Naive thymus-derived CD8-positive, alpha-beta T cell (primary cell): ENCODE measurements at regions of chr9 and their contacts with region 1.

Region 1: DNA sequence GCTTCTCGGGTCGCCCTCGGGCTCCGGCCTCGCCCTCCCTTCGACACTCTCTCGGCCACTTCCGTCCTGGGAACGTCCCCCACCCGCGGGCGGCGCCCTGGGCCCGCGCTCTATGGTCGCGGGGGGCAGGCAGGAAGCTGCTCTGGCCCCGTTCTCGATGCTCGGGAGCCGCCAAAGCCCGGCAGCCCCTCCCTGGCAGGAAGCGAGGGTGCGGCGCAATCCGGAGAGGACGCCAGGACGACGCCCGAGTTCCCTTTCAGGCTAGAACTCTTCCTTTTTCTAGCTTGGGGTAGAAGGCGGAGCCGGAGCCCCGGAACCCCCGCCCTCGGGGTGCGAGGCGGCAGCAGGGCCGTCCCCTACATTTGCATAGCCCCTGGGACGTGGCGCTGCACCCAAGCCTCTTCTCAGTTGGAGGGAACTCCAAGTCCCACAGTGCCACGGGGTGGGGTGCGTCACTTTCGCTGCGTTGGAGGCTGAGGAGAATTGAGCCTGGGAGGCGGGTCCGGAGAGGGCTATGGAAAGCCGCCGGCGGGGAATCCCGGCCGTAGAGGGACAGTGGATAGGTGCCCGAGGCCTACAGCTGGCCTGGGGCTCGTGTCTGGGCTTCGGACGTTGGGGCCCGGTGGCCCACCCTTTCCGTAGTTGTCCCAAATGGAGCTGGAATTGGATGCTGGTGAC is at the starts of genes CREB3 and TLN1:
- DNase-seq: peak; percentile 87 to 98 (median 95)
- ATAC-seq: peak; percentile 91 to 93
- H3K4me3 Mint-ChIP-seq: peak within 1 kb of the TSS in 5 of 10 donors; percentile 94 to 98 (median 95)
- H3K27ac Mint-ChIP-seq: peak within 1 kb of the TSS in 8 of 10 donors; percentile 83 to 97 (median 95)
- H3K4me1 Mint-ChIP-seq: peaks cover 19 to 30% (median 24%) of the 10 kb centered on the region in 4 donors
- H3K27me3 Mint-ChIP-seq: no peaks in the 10 kb centered on the region
- polyA plus RNA-seq, gene CREB3: 29.8 to 40.3 (median 33.1) TPM
- polyA plus RNA-seq, gene TLN1: 32.9 to 88.9 (median 36.4) TPM

Region 2: GRCh38 chr9:35616681-35617459 is 115.4 kb before region 1 on chr9:
- POLR2A ChIA-PET with region 1: interaction called, 11 read pairs
- DNase-seq: peak; percentile 53 to 84 (median 64)
- ATAC-seq: peak; percentile 74 to 84
- H3K4me3 Mint-ChIP-seq: peak overlapping the region; percentile 82 to 94 (median 87)
- H3K27ac Mint-ChIP-seq: peak overlapping the region; percentile 90 to 98 (median 94)
- H3K4me1 Mint-ChIP-seq: peaks cover 32 to 88% (median 45%) of the 10 kb centered on the region in 4 donors
- H3K27me3 Mint-ChIP-seq: no peaks in the 10 kb centered on the region

Region 3: DNA sequence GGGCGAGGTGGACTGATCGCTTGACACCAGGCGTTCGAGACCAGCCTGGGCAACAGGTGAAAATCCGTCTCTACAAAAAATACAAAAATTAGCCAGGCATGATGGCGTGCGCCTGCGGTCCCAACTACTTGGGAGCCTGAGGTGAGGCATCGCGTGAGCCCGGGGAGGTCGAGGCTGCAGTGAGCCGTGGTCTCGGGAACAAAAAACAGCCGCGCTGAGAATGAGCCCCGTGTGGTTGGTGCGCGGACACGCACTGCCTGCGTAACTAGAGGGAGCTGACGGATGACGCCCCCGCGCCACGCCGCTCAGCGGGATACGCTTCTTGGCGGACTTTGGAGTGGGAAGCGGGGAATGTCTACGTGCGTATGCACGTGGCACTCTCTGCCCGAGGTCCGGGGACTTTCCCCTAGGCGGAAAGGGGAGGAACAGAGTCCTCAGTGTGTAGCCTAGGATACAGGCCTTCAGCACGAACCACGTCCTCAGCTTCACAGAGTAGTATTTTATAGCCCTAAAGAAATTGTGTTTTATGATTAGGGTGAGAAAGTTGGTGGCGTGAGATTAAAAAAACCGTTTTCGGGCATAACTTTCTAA is 74.6 kb before region 1 on chr9 and contains the start of gene RMRP:
- POLR2A ChIA-PET with region 1: interaction called, 31 read pairs
- DNase-seq: peak in 9 of 10 donors; percentile 69 to 94 (median 89)
- ATAC-seq: peak; percentile 83 to 85
- H3K4me3 Mint-ChIP-seq: peak within 1 kb of the TSS; percentile 74 to 94 (median 87)
- H3K27ac Mint-ChIP-seq: peak within 1 kb of the TSS; percentile 94 to 100 (median 98)
- H3K4me1 Mint-ChIP-seq: peaks cover 36 to 75% (median 70%) of the 10 kb centered on the region in 4 donors
- H3K27me3 Mint-ChIP-seq: peaks cover 0 to 5% (median 0%) of the 10 kb centered on the region in 5 donors
- polyA plus RNA-seq, gene RMRP: 33.0 TPM in 1 of 3 donors, not detected in the others

Region 4: DNA sequence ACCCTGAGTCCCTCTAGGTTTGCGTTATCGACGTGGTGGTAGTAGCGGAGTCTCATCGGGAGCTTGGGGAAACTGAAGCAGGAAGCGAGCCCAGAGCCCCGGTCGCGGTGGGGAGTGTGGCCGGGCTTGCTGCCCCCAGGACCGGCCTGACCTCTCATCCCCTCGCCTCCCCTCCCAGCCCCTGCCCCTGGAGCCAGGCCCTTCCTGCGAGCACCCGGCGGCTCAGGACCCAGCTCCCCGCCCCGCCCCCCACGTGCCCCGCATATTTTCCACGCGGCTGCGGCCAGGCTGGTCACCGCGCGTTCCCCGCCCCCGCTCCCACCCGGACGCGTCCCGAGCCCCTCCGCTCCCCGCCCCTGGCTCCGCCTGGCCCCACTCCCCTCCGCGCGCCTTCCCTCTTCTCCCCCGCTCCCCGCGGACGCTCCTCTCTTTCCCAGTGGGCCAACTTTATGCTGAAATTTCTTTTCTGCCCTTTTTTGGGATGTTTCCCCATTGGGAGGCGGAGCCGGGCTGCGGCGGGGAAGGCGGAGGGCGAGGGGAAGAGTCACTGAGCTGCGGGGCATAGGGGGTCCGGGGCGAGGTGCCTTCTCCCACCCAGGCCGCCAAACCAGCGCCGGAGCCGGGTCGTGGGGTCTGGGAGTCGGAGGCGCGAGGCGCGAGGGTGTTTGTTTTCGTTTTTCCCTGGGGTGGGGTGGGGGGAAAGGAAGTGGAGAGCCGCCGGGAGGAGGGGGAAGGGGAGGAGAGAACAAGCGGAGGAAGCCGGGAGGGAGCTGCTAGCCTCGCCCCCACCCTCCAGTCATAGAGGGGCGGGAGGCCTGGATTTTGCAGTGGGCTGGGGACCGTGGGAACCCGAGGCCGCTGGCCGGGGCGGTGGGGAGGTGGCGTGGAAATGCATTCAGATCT is 41.6 kb before region 1 on chr9:
- POLR2A ChIA-PET with region 1: interaction called, 13 read pairs
- DNase-seq: peak in 7 of 10 donors; percentile 17 to 39 (median 30)
- ATAC-seq: peak; percentile 63 to 71
- H3K4me3 Mint-ChIP-seq: peak overlapping the region; percentile 86 to 94 (median 88)
- H3K27ac Mint-ChIP-seq: peak overlapping the region; percentile 29 to 87 (median 78)
- H3K4me1 Mint-ChIP-seq: peaks cover 11 to 27% (median 21%) of the 10 kb centered on the region in 4 donors
- H3K27me3 Mint-ChIP-seq: no peaks in the 10 kb centered on the region

Region 5: DNA sequence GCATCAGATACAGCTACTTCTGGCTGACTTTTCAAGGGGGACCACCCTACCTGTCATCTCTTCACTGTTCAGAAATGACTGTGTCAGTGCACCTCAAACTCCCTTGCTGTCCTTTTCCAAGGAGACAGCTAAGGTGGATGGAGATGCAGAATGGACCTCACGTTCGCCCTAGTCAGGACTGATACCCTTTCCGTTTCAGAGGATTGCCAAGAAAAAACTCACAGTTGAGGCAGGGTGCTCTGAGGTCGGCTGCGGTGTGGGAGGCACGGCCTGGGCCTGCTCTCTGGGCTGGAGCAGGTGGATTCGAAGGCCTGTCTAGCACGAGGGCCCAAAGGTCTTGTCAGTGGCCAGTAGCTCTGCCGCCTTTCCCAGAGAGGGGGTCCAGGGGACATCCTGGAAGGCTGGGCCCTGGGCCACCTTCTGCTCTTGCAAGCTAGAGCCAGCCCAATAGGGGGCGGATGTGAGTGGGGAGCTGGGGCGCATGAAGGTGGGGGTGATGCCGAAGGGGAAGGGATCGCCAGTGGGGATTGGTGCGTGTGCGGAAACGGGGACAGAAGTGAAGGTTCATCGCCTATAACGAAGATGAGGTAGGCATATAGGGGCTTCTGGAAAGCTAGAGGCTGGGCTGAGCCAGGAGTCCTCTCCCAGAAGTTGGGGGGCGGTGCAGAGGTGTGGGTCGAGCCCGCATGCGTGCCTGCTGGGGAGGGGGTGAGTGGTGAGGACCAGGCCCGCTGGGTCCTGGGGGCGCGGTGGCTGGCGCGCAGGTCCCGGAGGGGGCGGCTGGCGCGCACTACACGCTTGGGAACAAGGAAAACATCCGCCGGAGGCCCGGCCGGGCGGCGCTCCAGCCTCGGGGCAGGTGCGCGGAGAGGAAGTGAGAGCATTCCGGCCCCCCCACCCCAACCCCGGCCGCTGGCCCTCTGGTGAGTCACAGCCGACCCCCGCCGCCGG is 24.3 kb after region 1 on chr9:
- POLR2A ChIA-PET with region 1: interaction called, 32 read pairs
- DNase-seq: peak; percentile 63 to 88 (median 74)
- ATAC-seq: peak; percentile 85 to 94
- H3K4me3 Mint-ChIP-seq: peak overlapping the region; percentile 87 to 99 (median 96)
- H3K27ac Mint-ChIP-seq: peak overlapping the region; percentile 91 to 99 (median 96)
- H3K4me1 Mint-ChIP-seq: peaks cover 22 to 56% (median 46%) of the 10 kb centered on the region in 4 donors
- H3K27me3 Mint-ChIP-seq: no peaks in the 10 kb centered on the region